GM13976 (cell line): ENCODE measurements at regions of chr1 and their contacts with region 1.

Region 1: GRCh38 chr1:167605576-167605975 is 24.5 kb upstream of the RCSD1 start:
- DNase-seq: no peak
- CTCF ChIP-seq: no peak

Region 2: GRCh38 chr1:166627558-166627957 is 978.0 kb before region 1 on chr1:
- in situ Hi-C with region 1: no loop called
- DNase-seq: no peak
- CTCF ChIP-seq: no peak

Region 3: DNA sequence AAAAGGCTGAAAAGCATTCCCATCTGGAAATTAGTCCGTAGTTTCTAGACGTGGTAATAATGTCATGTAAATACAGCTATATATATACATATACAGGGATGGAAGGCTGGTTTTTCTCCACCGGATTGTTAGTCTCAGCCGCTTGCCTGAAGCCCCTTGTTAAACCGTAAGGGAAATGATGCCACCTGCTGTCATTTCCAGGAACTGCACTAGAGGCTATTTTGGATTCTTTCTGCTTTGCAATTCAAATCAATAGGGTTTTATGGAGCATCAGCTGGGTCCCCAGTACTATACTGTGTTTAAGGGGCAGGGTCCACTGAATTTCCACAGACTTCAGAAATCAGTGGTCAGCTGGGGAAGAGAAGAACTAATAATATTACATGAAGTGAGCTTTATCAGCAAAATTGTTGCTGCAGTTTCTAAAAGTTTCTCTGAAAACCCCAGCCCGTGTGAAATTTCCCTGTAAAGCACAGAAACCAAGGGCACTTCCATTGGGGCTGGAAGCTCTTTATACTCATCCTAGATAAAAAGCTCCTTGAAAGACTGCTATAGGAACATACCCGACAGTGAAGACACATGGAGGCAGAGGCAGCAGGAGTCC is 82.4 kb after region 1 on chr1:
- in situ Hi-C with region 1: loop called (anchors 5 kb)
- DNase-seq: peak; percentile 80
- CTCF ChIP-seq: peak; percentile 69

Region 4: GRCh38 chr1:167791281-167792187 is 186.0 kb after region 1 on chr1:
- in situ Hi-C with region 1: no loop called
- DNase-seq: no peak
- CTCF ChIP-seq: no peak